Left lung (tissue), 14 donors: ENCODE measurements at regions of chr6 and their contacts with region 1.

Region 1: DNA sequence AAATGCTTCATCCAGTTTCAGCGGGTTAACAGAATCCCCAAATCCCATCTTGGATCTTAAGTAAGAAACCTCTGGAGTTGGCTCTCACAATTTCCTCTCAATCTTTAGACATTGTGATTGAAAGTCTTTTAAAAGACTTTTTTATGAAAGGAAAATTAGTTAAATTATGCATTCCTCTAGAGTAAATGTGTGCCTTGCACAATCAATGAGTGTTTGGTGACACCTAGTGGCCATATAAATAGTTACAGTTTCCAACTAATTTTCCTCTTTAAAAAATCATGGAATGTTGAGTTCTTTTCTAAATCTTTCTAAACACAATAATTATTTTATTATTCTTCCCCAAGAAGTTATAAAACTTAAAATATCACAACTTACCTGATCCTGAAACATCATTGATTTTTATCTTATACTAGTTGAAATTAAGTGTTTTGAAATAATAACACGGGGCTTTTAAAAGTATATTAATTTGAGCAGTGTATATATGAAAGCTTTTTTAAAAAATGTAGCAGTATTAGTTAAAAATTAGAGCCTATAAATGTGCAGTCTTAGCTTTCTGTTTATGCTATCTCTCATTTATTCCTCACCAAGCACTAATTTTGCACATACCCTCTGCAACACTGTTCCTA is 66.4 kb downstream of the PKHD1 start:
- DNase-seq: peak in 2 of 4 donors; percentile 29 to 41
- ATAC-seq: peak; percentile 67
- H3K4me3 ChIP-seq: no peak overlapping the region
- H3K27ac ChIP-seq: no peak overlapping the region
- H3K4me1 ChIP-seq: no peaks in the 10 kb centered on the region
- H3K27me3 ChIP-seq: peaks cover 0 to 4% of the 10 kb centered on the region in 2 donors
- CTCF ChIP-seq: peak; percentile 52 to 84

Region 2: DNA sequence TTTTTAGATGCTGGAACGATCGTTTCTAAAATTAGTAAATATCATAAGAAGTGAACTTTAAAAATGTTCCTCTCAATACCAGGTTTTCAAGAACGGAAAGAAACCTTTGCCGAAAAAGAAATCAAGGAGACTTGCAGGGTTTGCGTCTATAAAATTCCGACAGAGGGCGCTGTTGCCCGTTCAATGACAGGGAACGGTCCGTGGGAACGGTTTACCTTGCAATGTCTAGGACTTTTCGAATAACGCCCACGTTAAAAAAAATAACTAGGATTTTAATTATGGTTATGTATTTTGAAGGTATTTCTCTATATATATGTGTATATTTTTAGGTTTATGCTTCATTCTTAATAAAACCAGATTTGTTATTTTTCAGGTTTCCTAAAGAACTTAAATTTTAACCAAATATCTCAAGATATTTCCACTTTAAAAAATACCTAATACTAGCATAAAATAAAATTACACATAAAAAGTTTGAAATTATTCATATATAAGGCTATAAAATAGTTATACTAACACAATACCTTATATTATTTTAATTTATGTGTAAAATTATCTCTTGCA is 1204.9 kb before region 1 on chr6:
- intact Hi-C with region 1: loop called in 1 of 2 experiments (anchors 10 kb)
- DNase-seq: peak; percentile 62 to 82 (median 66)
- ATAC-seq: peak; percentile 95
- H3K4me3 ChIP-seq: peak overlapping the region; percentile 25 to 40
- H3K27ac ChIP-seq: no peak overlapping the region
- H3K4me1 ChIP-seq: peaks cover 0 to 24% of the 10 kb centered on the region in 2 donors
- H3K27me3 ChIP-seq: peaks cover 47 to 85% of the 10 kb centered on the region in 2 donors
- CTCF ChIP-seq: peak; percentile 80 to 93

Region 3: GRCh38 chr6:51855310-51856082 is 165.6 kb before region 1 on chr6:
- intact Hi-C with region 1: loop called in 1 of 2 experiments (anchors 10 kb)
- DNase-seq: peak in 2 of 4 donors; percentile 17 to 58
- ATAC-seq: peak; percentile 72
- H3K4me3 ChIP-seq: no peak overlapping the region
- H3K27ac ChIP-seq: no peak overlapping the region
- H3K4me1 ChIP-seq: no peaks in the 10 kb centered on the region
- H3K27me3 ChIP-seq: no peaks in the 10 kb centered on the region
- CTCF ChIP-seq: peak; percentile 60 to 68